CD8-positive, alpha-beta T cell (primary cell): ENCODE measurements at regions of chr14 and their contacts with region 1.

Region 1: GRCh38 chr14:23469127-23469905 is at the start of gene NGDN:
- DNase-seq: peak; percentile 84 to 99 (median 93)
- ATAC-seq: peak; percentile 89
- H3K4me3 ChIP-seq: peak within 1 kb of the TSS; percentile 71 to 83
- H3K4me3 Mint-ChIP-seq: no peak within 1 kb of the TSS
- H3K27ac ChIP-seq: peak within 1 kb of the TSS; percentile 80 to 93
- H3K27ac Mint-ChIP-seq: peak within 1 kb of the TSS; percentile 6
- H3K4me1 ChIP-seq: peaks cover 16% of the 10 kb centered on the region
- H3K4me1 Mint-ChIP-seq: peaks cover 12% of the 10 kb centered on the region
- H3K27me3 ChIP-seq: no peaks in the 10 kb centered on the region
- H3K27me3 Mint-ChIP-seq: no peaks in the 10 kb centered on the region
- CTCF ChIP-seq: peak; percentile 83
- total RNA-seq, gene NGDN: 173 TPM

Region 2: GRCh38 chr14:22829661-22830442 is 639.5 kb before region 1 on chr14 and contains the start of gene MRPL52:
- CTCF ChIA-PET with region 1: no interaction called
- POLR2A ChIA-PET with region 1: no interaction called
- intact Hi-C with region 1: loop called in 1 of 2 experiments (anchors 5 kb)
- DNase-seq: peak; percentile 81 to 97 (median 90)
- ATAC-seq: peak; percentile 95
- H3K4me3 ChIP-seq: peak within 1 kb of the TSS; percentile 89 to 91
- H3K4me3 Mint-ChIP-seq: peak within 1 kb of the TSS; percentile 92
- H3K27ac ChIP-seq: peak within 1 kb of the TSS; percentile 69 to 90
- H3K27ac Mint-ChIP-seq: peak within 1 kb of the TSS; percentile 96
- H3K4me1 ChIP-seq: peaks cover 13% of the 10 kb centered on the region
- H3K4me1 Mint-ChIP-seq: peaks cover 31% of the 10 kb centered on the region
- H3K27me3 ChIP-seq: peaks cover 0 to 5% of the 10 kb centered on the region in 2 experiments
- H3K27me3 Mint-ChIP-seq: peaks cover 7% of the 10 kb centered on the region
- CTCF ChIP-seq: no peak
- total RNA-seq, gene MRPL52: 22.3 to 25.7 TPM

Region 3: GRCh38 chr14:22918804-22919600 is 550.3 kb before region 1 on chr14 and contains the start of gene RBM23:
- CTCF ChIA-PET with region 1: no interaction called
- POLR2A ChIA-PET with region 1: no interaction called
- intact Hi-C with region 1: loop called in 1 of 2 experiments (anchors 2 kb)
- DNase-seq: peak; percentile 98 to 100 (median 100)
- ATAC-seq: peak; percentile 91
- H3K4me3 ChIP-seq: peak within 1 kb of the TSS; percentile 59 to 88
- H3K4me3 Mint-ChIP-seq: peak within 1 kb of the TSS; percentile 91
- H3K27ac ChIP-seq: peak within 1 kb of the TSS; percentile 100
- H3K27ac Mint-ChIP-seq: peak within 1 kb of the TSS; percentile 99
- H3K4me1 ChIP-seq: peaks cover 30% of the 10 kb centered on the region
- H3K4me1 Mint-ChIP-seq: peaks cover 42% of the 10 kb centered on the region
- H3K27me3 ChIP-seq: no peaks in the 10 kb centered on the region
- H3K27me3 Mint-ChIP-seq: no peaks in the 10 kb centered on the region
- CTCF ChIP-seq: no peak
- total RNA-seq, gene RBM23: 135 to 141 TPM

Region 4: DNA sequence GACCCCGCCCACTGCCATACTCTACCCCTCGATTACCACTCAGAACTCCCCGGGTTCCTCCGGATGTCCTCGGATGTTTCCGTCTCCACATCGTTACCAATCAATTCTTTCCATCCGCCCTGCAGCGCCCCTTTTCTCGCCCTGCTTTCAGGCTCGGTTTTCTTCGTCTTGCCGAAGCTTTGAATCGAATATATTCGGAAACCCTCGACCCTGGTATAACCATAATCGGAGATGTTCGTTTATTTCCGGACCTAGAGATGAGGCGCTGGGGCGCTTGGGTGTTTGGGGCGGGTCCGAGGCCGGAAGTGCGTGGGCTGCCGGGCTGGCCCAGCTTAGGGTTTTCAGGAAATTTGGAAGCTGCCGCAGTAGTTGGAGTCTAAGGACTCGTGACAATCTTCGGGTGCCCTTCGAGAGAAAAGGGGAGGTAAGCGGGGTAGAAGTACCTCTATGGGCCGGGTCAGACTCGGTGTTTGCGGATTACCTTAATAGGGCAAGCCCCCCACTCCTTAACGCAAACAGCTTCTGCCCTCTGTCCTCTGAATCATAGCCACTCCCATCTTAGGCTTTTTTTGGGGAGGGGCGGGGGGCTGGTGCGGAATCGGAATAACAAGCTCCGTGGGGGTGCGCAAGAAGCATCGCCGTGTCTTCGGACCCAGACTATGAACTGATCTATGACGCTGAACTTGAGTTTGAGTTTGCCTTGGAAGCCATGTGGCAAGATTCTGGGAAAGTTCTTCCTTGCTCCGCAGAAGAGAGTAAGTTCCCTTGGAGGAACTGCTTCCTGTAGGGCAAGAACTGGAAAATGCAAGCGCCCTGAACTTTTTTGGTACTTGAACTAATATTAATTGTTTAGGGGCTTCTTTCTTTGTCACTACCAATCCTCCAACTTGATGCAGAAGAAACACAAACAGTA is 373.9 kb before region 1 on chr14 and contains the start of gene C14orf119:
- CTCF ChIA-PET with region 1: no interaction called
- POLR2A ChIA-PET with region 1: no interaction called
- intact Hi-C with region 1: loop called in 1 of 2 experiments (anchors 1 kb)
- DNase-seq: peak in 8 of 9 experiments; percentile 98 to 100 (median 100)
- ATAC-seq: peak; percentile 86
- H3K4me3 ChIP-seq: peak within 1 kb of the TSS; percentile 81 to 93
- H3K4me3 Mint-ChIP-seq: no peak within 1 kb of the TSS
- H3K27ac ChIP-seq: peak within 1 kb of the TSS; percentile 93 to 98
- H3K27ac Mint-ChIP-seq: no peak within 1 kb of the TSS
- H3K4me1 ChIP-seq: peaks cover 39% of the 10 kb centered on the region
- H3K4me1 Mint-ChIP-seq: peaks cover 51% of the 10 kb centered on the region
- H3K27me3 ChIP-seq: no peaks in the 10 kb centered on the region
- H3K27me3 Mint-ChIP-seq: no peaks in the 10 kb centered on the region
- CTCF ChIP-seq: no peak
- total RNA-seq, gene C14orf119: 3.5 to 3.8 TPM

Region 5: DNA sequence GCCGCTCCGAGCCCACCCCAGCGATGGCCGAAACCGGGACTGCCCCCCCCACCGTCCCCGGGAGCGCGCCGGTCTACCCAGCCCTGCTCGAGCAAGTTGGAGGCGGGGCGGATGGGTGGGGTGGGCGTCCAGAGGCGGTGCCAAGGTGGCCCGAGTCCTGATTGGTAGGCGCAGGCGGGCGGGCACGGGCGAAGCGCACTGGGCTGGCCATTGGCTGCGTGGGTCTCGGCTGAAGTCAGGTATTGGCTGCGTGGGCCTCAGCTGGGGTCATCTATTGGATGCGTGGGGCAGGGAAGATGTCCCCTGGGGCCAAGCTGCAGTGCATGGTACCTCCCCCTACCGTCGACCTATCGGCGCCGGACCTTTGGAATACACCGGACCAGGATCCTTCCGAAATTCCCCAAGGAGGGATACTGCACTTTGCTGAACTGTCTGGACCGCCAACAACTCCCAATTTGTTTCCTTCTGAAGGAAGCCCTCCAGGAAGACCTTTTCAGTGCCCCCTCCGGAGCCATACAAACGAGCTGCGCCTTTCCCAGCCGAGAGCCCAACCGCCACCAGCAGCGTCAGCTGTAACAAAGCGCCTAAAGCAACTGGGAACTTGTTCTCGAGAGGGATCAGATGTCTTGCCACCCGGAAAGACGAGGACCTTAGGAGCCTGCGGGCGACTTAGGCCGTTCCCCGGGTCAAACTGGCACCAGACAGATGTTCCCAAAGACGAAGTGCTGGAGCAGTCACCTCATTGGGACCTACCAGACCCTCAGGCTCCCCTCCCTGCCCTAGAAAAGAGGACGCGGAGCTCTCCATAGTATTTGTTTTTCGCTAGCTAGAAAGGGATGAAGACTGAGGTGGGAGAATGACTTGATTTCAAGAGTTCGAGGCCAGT is 183.1 kb before region 1 on chr14 and contains the start of gene HOMEZ:
- CTCF ChIA-PET with region 1: no interaction called
- POLR2A ChIA-PET with region 1: no interaction called
- intact Hi-C with region 1: loop called (anchors 1 kb)
- DNase-seq: peak; percentile 94 to 98 (median 97)
- ATAC-seq: peak; percentile 96
- H3K4me3 ChIP-seq: peak within 1 kb of the TSS; percentile 89 to 94
- H3K4me3 Mint-ChIP-seq: peak within 1 kb of the TSS; percentile 99
- H3K27ac ChIP-seq: peak within 1 kb of the TSS; percentile 67 to 83
- H3K27ac Mint-ChIP-seq: peak within 1 kb of the TSS; percentile 96
- H3K4me1 ChIP-seq: peaks cover 20% of the 10 kb centered on the region
- H3K4me1 Mint-ChIP-seq: peaks cover 36% of the 10 kb centered on the region
- H3K27me3 ChIP-seq: no peaks in the 10 kb centered on the region
- H3K27me3 Mint-ChIP-seq: no peaks in the 10 kb centered on the region
- CTCF ChIP-seq: no peak
- total RNA-seq, gene HOMEZ: 3.1 to 4.0 TPM

Region 6: GRCh38 chr14:23567192-23568020 is 98.1 kb after region 1 on chr14 and contains the start of gene AP1G2:
- CTCF ChIA-PET with region 1: interaction called, 279 read pairs
- POLR2A ChIA-PET with region 1: no interaction called
- intact Hi-C with region 1: loop called in 1 of 2 experiments (anchors 1 kb)
- DNase-seq: peak; percentile 66 to 92 (median 84)
- ATAC-seq: peak; percentile 90
- H3K4me3 ChIP-seq: peak within 1 kb of the TSS; percentile 75 to 97
- H3K4me3 Mint-ChIP-seq: peak within 1 kb of the TSS; percentile 99
- H3K27ac ChIP-seq: peak within 1 kb of the TSS; percentile 86
- H3K27ac Mint-ChIP-seq: peak within 1 kb of the TSS; percentile 97
- H3K4me1 ChIP-seq: peaks cover 20% of the 10 kb centered on the region
- H3K4me1 Mint-ChIP-seq: peaks cover 44% of the 10 kb centered on the region
- H3K27me3 ChIP-seq: no peaks in the 10 kb centered on the region
- H3K27me3 Mint-ChIP-seq: peaks cover 1% of the 10 kb centered on the region
- CTCF ChIP-seq: no peak
- total RNA-seq, gene AP1G2: 153 to 160 TPM

Region 7: DNA sequence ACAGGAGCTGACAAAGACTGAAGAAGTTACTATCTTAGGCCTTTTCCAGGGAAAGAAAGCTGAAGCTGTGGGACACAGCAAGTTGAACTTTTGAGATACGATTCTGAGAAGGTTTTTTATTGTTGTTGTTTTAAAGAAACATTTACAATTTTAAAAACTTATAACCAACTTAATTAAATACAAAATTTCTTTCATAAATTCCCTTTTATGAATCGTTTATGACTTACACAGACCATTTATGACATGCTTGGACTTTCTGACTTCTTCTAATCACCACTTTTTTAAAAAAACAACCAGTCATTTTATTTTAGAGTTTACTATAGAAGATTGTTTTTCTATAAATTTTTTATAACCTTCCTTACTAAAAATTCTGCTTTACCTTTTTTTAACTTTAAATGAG is 235.6 kb after region 1 on chr14:
- CTCF ChIA-PET with region 1: no interaction called
- POLR2A ChIA-PET with region 1: no interaction called
- intact Hi-C with region 1: no loop called
- DNase-seq: no peak
- ATAC-seq: no peak
- H3K4me3 ChIP-seq: no peak overlapping the region
- H3K4me3 Mint-ChIP-seq: no peak overlapping the region
- H3K27ac ChIP-seq: no peak overlapping the region
- H3K27ac Mint-ChIP-seq: no peak overlapping the region
- H3K4me1 ChIP-seq: no peaks in the 10 kb centered on the region
- H3K4me1 Mint-ChIP-seq: no peaks in the 10 kb centered on the region
- H3K27me3 ChIP-seq: no peaks in the 10 kb centered on the region
- H3K27me3 Mint-ChIP-seq: peaks cover 27% of the 10 kb centered on the region
- CTCF ChIP-seq: no peak

Region 8: DNA sequence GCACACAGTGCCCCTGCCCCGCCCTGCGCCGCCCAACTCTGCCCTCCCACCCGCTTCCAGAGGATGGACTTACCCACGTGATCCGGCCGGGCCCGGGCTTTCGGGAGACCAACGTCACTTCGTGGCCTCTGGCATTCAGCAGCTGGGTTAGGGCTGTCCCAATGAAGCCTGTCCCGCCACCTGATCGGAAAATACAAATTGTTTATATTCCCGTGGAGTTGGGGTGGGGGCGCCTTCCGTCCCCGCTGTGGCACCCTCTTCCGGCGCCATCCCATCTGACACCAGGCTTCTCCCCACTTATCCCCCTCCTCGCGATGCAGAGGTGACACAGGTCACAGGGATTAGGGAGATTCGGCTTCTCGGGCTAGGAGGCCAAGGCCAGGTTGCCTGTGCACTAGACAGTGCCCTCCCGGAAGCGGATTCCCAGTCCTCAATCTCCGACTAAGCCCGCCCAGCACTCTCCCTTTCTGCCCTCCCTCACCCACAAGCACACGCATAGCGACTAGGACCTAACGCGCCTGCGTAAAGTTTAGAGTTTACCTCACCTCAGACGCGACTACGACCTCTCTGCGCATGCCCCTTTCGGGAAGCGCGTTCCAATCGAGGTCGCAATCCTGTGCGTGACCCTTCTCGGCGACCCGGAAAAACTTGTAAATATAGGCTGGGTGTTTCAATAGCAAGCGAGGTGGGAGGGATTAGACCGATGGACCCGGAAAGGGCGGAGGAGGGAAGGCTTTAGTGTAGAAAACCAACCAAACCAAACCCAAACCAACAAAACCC is 973.1 kb after region 1 on chr14 and contains the start of gene SDR39U1:
- CTCF ChIA-PET with region 1: no interaction called
- POLR2A ChIA-PET with region 1: no interaction called
- intact Hi-C with region 1: loop called (anchors 10 kb)
- DNase-seq: peak; percentile 93 to 100 (median 95)
- ATAC-seq: peak; percentile 89
- H3K4me3 ChIP-seq: peak within 1 kb of the TSS; percentile 77 to 89
- H3K4me3 Mint-ChIP-seq: peak within 1 kb of the TSS; percentile 95
- H3K27ac ChIP-seq: peak within 1 kb of the TSS; percentile 96
- H3K27ac Mint-ChIP-seq: peak within 1 kb of the TSS; percentile 97
- H3K4me1 ChIP-seq: peaks cover 35% of the 10 kb centered on the region
- H3K4me1 Mint-ChIP-seq: peaks cover 45% of the 10 kb centered on the region
- H3K27me3 ChIP-seq: no peaks in the 10 kb centered on the region
- H3K27me3 Mint-ChIP-seq: no peaks in the 10 kb centered on the region
- CTCF ChIP-seq: no peak
- total RNA-seq, gene SDR39U1: 75.0 to 84.4 TPM